ENCODE measurements at regions of chr4 and their contacts with region 1.

Region 1: GRCh38 chr4:73729534-73730165 is 10.7 kb upstream of the CXCL8 start:
- DNase-seq: no peak
- ATAC-seq: peak; percentile 79
- H3K4me3 ChIP-seq: no peak overlapping the region
- H3K27ac ChIP-seq: no peak overlapping the region
- H3K4me1 ChIP-seq: peaks cover 20% of the 10 kb centered on the region
- H3K27me3 ChIP-seq: no peaks in the 10 kb centered on the region
- CTCF ChIP-seq: peak; percentile 67 to 79 (median 73)
- EP300 ChIP-seq: no peak
- POLR2A ChIP-seq: no peak
- RAD21 ChIP-seq: peak; percentile 66

Region 2: GRCh38 chr4:73593631-73594241 is 135.9 kb before region 1 on chr4:
- CTCF ChIA-PET with region 1: no interaction called
- POLR2A ChIA-PET with region 1: no interaction called
- RAD21 ChIA-PET with region 1: interaction called, 3 read pairs
- SMC1A ChIA-PET with region 1: no interaction called
- in situ Hi-C with region 1: no loop called
- intact Hi-C with region 1: loop called (anchors 5 kb)
- DNase-seq: no peak
- ATAC-seq: no peak
- H3K4me3 ChIP-seq: no peak overlapping the region
- H3K27ac ChIP-seq: no peak overlapping the region
- H3K4me1 ChIP-seq: peaks cover 23% of the 10 kb centered on the region
- H3K27me3 ChIP-seq: no peaks in the 10 kb centered on the region
- CTCF ChIP-seq: peak; percentile 43 to 49 (median 48); a peak in 5 of 6 replicates
- EP300 ChIP-seq: no peak
- POLR2A ChIP-seq: no peak
- RAD21 ChIP-seq: peak; percentile 59

Region 3: GRCh38 chr4:73668782-73669201 is 60.9 kb before region 1 on chr4:
- CTCF ChIA-PET with region 1: interaction called, 4 read pairs
- POLR2A ChIA-PET with region 1: no interaction called
- RAD21 ChIA-PET with region 1: no interaction called
- SMC1A ChIA-PET with region 1: interaction called, 3 read pairs
- in situ Hi-C with region 1: no loop called
- intact Hi-C with region 1: loop called (anchors 5 kb)
- DNase-seq: no peak
- ATAC-seq: peak; percentile 64
- H3K4me3 ChIP-seq: no peak overlapping the region
- H3K27ac ChIP-seq: no peak overlapping the region
- H3K4me1 ChIP-seq: no peaks in the 10 kb centered on the region
- H3K27me3 ChIP-seq: no peaks in the 10 kb centered on the region
- CTCF ChIP-seq: no peak
- EP300 ChIP-seq: no peak
- POLR2A ChIP-seq: no peak
- RAD21 ChIP-seq: no peak

Region 4: DNA sequence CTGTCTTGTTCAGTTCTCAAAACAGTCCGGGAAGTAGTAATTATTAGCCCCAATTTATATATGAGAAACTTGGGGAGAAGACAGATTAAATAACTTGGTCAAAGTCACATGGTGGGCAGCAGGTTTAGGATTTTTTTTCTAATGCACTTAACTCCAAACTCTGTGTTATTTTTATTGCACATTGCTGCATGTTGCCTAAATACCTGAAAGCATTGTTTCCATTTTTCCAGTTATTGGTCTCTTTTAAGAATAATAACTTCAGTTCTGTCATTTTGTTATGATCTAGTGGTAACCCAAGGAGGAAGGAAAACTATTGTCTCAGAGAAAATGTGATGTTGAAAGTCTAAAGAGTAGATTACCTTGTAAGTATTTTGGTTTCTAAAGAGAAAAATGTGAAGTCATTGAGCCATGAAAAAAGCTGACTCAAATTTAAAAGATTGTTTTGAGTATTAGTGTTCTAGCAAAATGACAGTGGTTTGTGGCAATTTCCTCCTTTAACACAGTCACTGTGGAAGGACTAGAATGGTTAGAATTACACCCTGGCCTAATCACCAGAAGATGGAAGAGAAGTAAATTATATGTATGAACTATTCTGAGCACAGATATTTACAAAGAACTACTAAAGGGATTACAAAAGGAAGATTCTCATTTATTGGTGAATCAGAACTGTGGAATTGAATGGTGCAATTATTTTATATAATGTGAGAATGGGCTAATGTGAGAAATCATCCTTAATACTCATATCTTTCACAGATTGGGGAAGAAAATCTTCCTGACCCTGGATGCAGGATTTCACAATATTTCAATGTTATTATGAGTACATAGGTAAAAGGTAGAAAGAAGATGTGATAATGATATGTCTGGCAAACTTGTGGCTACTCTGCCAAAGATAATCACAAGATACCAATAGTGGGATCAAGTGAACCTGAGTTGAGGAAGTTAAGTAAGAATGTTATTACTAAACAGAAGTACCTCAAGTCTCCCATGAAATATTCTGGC is 11.0 kb before region 1 on chr4:
- CTCF ChIA-PET with region 1: interaction called, 25 read pairs
- POLR2A ChIA-PET with region 1: interaction called, 4 read pairs
- RAD21 ChIA-PET with region 1: interaction called, 6 read pairs
- SMC1A ChIA-PET with region 1: interaction called, 22 read pairs
- in situ Hi-C with region 1: no loop called
- intact Hi-C with region 1: no loop called
- DNase-seq: peak; percentile 84
- ATAC-seq: peak; percentile 95
- H3K4me3 ChIP-seq: no peak overlapping the region
- H3K27ac ChIP-seq: peak overlapping the region; percentile 40; the same call in 1 of the 2 replicates
- H3K4me1 ChIP-seq: peaks cover 17% of the 10 kb centered on the region
- H3K27me3 ChIP-seq: no peaks in the 10 kb centered on the region
- CTCF ChIP-seq: no peak
- EP300 ChIP-seq: peak; percentile 85 to 90
- POLR2A ChIP-seq: no peak
- RAD21 ChIP-seq: no peak

Region 5: GRCh38 chr4:73751166-73751565 is 21.5 kb after region 1 on chr4:
- CTCF ChIA-PET with region 1: interaction called, 5 read pairs
- POLR2A ChIA-PET with region 1: no interaction called
- RAD21 ChIA-PET with region 1: interaction called, 5 read pairs
- SMC1A ChIA-PET with region 1: interaction called, 11 read pairs
- in situ Hi-C with region 1: no loop called
- intact Hi-C with region 1: no loop called
- DNase-seq: peak; percentile 28
- ATAC-seq: peak; percentile 91
- H3K4me3 ChIP-seq: no peak overlapping the region
- H3K27ac ChIP-seq: no peak overlapping the region
- H3K4me1 ChIP-seq: no peaks in the 10 kb centered on the region
- H3K27me3 ChIP-seq: no peaks in the 10 kb centered on the region
- CTCF ChIP-seq: no peak
- EP300 ChIP-seq: peak; percentile 20 to 60; a peak in 3 of 4 replicates
- POLR2A ChIP-seq: no peak
- RAD21 ChIP-seq: no peak

Region 6: DNA sequence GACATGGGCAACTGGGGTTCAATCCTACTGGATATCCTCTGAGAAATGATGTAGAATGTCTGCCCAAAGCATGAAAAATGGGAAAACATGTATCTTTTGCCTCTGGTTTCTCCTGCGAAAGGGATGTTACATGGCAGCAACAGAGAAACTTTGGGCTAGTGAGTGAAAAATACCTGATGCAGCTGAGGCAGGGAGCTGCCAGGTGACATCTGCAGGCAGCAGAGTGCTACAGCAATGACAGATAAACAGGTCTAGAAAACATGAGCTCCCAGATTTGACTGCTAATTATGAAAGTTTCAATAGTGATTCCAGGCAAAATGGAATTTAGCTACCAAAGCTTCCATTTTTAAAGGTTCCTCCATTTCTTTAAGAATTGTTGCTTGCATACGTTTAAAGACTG is 134.7 kb after region 1 on chr4:
- CTCF ChIA-PET with region 1: interaction called, 33 read pairs
- POLR2A ChIA-PET with region 1: no interaction called
- RAD21 ChIA-PET with region 1: interaction called, 5 read pairs
- SMC1A ChIA-PET with region 1: interaction called, 15 read pairs
- in situ Hi-C with region 1: no loop called
- intact Hi-C with region 1: loop called (anchors 1 kb)
- DNase-seq: no peak
- ATAC-seq: peak; percentile 62
- H3K4me3 ChIP-seq: no peak overlapping the region
- H3K27ac ChIP-seq: no peak overlapping the region
- H3K4me1 ChIP-seq: no peaks in the 10 kb centered on the region
- H3K27me3 ChIP-seq: peaks cover 0 to 6% of the 10 kb centered on the region in 2 experiments; a peak in 1 of 4 replicates
- CTCF ChIP-seq: peak; percentile 46 to 66 (median 57)
- EP300 ChIP-seq: no peak
- POLR2A ChIP-seq: no peak
- RAD21 ChIP-seq: peak; percentile 40; the same call in 1 of the 2 replicates

Region 7: DNA sequence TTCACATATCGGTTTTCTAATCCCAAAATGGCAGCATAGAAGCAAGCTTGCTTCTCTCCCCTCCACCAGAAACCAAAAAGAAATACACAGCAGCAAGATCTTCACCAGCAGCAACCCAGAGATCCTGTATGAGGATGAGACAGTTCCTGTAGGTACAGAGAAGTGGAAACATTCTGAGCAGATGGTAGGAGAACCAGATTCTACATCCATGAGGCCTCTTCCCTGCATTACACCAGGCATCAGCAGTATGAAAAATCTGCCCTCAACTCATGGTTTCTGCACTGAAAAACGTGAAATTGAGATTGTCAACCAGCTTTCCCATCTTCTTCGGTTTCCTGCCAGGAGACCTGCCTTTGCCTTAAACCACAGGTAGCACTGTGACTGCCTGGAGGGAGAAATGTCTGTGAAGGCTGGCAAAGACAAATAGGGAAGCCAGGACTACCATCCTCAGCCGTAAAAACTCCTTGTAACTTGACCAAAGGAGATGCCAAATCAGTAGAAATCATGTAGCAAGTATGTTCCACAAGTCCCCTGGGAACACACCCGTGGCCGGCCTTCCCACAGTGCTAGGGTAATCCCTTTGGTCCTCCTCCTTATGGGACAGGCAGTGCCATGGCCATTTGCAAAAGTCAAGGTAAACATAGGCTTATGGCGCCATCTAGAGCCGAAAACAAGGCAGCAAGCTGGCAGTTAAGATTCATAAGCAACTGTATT is 404.3 kb after region 1 on chr4:
- CTCF ChIA-PET with region 1: interaction called, 11 read pairs
- POLR2A ChIA-PET with region 1: no interaction called
- RAD21 ChIA-PET with region 1: interaction called, 4 read pairs
- SMC1A ChIA-PET with region 1: interaction called, 14 read pairs
- in situ Hi-C with region 1: no loop called
- intact Hi-C with region 1: loop called (anchors 1 kb)
- DNase-seq: peak; percentile 20
- ATAC-seq: peak; percentile 89
- H3K4me3 ChIP-seq: no peak overlapping the region
- H3K27ac ChIP-seq: no peak overlapping the region
- H3K4me1 ChIP-seq: no peaks in the 10 kb centered on the region
- H3K27me3 ChIP-seq: peaks cover 0 to 4% of the 10 kb centered on the region in 2 experiments; a peak in 1 of 4 replicates
- CTCF ChIP-seq: peak; percentile 69 to 86 (median 75)
- EP300 ChIP-seq: no peak
- POLR2A ChIP-seq: no peak
- RAD21 ChIP-seq: peak; percentile 86